Activated T-helper 1 cell treated with anti-CD3 and anti-CD28 coated beads, Interleukin-12 subunit alpha, Interleukin-12 subunit beta, Interleukin-2, Interleukin-4 antibody, amounts not matched to agents 30 ng/mL and 10 ng/mL and 1 ng/mL, durations not matched to agents 14 hours and 24 hours and 36 hours (primary cell): ENCODE measurements at regions of chr2 and their contacts with region 1.

Region 1: GRCh38 chr2:149313512-149313972 is 16.8 kb upstream of the LYPD6 start:
- DNase-seq: peak; percentile 1
- H3K4me3 Mint-ChIP-seq: no peak overlapping the region
- H3K27ac Mint-ChIP-seq: no peak overlapping the region
- H3K4me1 Mint-ChIP-seq: no peaks in the 10 kb centered on the region
- H3K27me3 Mint-ChIP-seq: no peaks in the 10 kb centered on the region

Region 2: GRCh38 chr2:149017116-149017985 is 296.2 kb before region 1 on chr2:
- intact Hi-C with region 1: loop called (anchors 1 kb)
- DNase-seq: peak; percentile 52
- H3K4me3 Mint-ChIP-seq: no peak overlapping the region
- H3K27ac Mint-ChIP-seq: no peak overlapping the region
- H3K4me1 Mint-ChIP-seq: peaks cover 12% of the 10 kb centered on the region
- H3K27me3 Mint-ChIP-seq: no peaks in the 10 kb centered on the region

Region 3: GRCh38 chr2:149221898-149222297 is 91.6 kb before region 1 on chr2:
- intact Hi-C with region 1: no loop called
- DNase-seq: no peak
- H3K4me3 Mint-ChIP-seq: no peak overlapping the region
- H3K27ac Mint-ChIP-seq: no peak overlapping the region
- H3K4me1 Mint-ChIP-seq: no peaks in the 10 kb centered on the region
- H3K27me3 Mint-ChIP-seq: peaks cover 5% of the 10 kb centered on the region